GM12878 (cell line): ENCODE measurements at regions of chrX and their contacts with region 1.

Region 1: GRCh38 chrX:6363188-6363587 is 134.5 kb upstream of the NLGN4X start:
- DNase-seq: no peak
- ATAC-seq: no peak
- H3K4me3 ChIP-seq: no peak overlapping the region
- H3K27ac ChIP-seq: no peak overlapping the region
- H3K4me1 ChIP-seq: no peaks in the 10 kb centered on the region
- H3K27me3 ChIP-seq: no peaks in the 10 kb centered on the region
- CTCF ChIP-seq: no peak; a peak in 1 of 6 replicates
- EP300 ChIP-seq: no peak
- POLR2A ChIP-seq: no peak
- RAD21 ChIP-seq: peak; percentile 28; the same call in 1 of the 2 replicates

Region 2: GRCh38 chrX:6203462-6204215 is 159.5 kb before region 1 on chrX:
- CTCF ChIA-PET with region 1: no interaction called
- POLR2A ChIA-PET with region 1: no interaction called
- RAD21 ChIA-PET with region 1: no interaction called
- SMC1A ChIA-PET with region 1: no interaction called
- in situ Hi-C with region 1: no loop called
- intact Hi-C with region 1: no loop called
- DNase-seq: no peak
- ATAC-seq: peak; percentile 77
- H3K4me3 ChIP-seq: no peak overlapping the region
- H3K27ac ChIP-seq: no peak overlapping the region
- H3K4me1 ChIP-seq: no peaks in the 10 kb centered on the region
- H3K27me3 ChIP-seq: no peaks in the 10 kb centered on the region
- CTCF ChIP-seq: no peak
- EP300 ChIP-seq: no peak
- POLR2A ChIP-seq: no peak
- RAD21 ChIP-seq: no peak

Region 3: GRCh38 chrX:6292599-6292998 is 70.6 kb before region 1 on chrX:
- CTCF ChIA-PET with region 1: interaction called, 22 read pairs
- POLR2A ChIA-PET with region 1: no interaction called
- RAD21 ChIA-PET with region 1: interaction called, 14 read pairs
- SMC1A ChIA-PET with region 1: interaction called, 11 read pairs
- in situ Hi-C with region 1: no loop called
- intact Hi-C with region 1: no loop called
- DNase-seq: no peak
- ATAC-seq: peak; percentile 84
- H3K4me3 ChIP-seq: no peak overlapping the region
- H3K27ac ChIP-seq: no peak overlapping the region
- H3K4me1 ChIP-seq: no peaks in the 10 kb centered on the region
- H3K27me3 ChIP-seq: no peaks in the 10 kb centered on the region
- CTCF ChIP-seq: peak in 2 of 3 experiments; percentile 21 to 32; a peak in 2 of 6 replicates
- EP300 ChIP-seq: no peak
- POLR2A ChIP-seq: no peak
- RAD21 ChIP-seq: peak; percentile 55